Gastrocnemius medialis (tissue), 4 donors: ENCODE measurements at regions of chr1 and their contacts with region 1.

Region 1: GRCh38 chr1:11805447-11806306 is at the starts of genes CLCN6 and MTHFR:
- DNase-seq: peak; percentile 100
- ATAC-seq: peak; percentile 72 to 73
- H3K4me3 ChIP-seq: peak within 1 kb of the TSS; percentile 82 to 95 (median 86)
- H3K27ac ChIP-seq: peak within 1 kb of the TSS; percentile 92 to 99 (median 96)
- H3K4me1 ChIP-seq: peaks cover 57 to 63% of the 10 kb centered on the region in 2 donors
- H3K27me3 ChIP-seq: no peaks in the 10 kb centered on the region
- CTCF ChIP-seq: peak in 1 of 5 experiments; percentile 55
- POLR2A ChIP-seq: peak; percentile 96 to 98
- total RNA-seq, gene CLCN6: 7.1 to 11.9 (median 9.5) TPM
- total RNA-seq, gene MTHFR: 10.2 to 24.7 (median 18.1) TPM

Region 2: GRCh38 chr1:11882814-11883538 is 77.3 kb after region 1 on chr1:
- in situ Hi-C with region 1: no loop called
- intact Hi-C with region 1: loop called (anchors 5 kb)
- DNase-seq: peak; percentile 73 to 84
- ATAC-seq: peak in 1 of 2 donors; percentile 10
- H3K4me3 ChIP-seq: no peak overlapping the region
- H3K27ac ChIP-seq: peak overlapping the region; percentile 6 to 97 (median 52)
- H3K4me1 ChIP-seq: peaks cover 57 to 75% of the 10 kb centered on the region in 2 donors
- H3K27me3 ChIP-seq: no peaks in the 10 kb centered on the region
- CTCF ChIP-seq: no peak
- POLR2A ChIP-seq: peak in 1 of 2 donors; percentile 43